Activated CD4-positive, alpha-beta T cell treated with anti-CD3 and anti-CD28 coated beads, Interleukin-2, amount 10 ng/mL, durations not matched to agents 24 days and 14 days (primary cell): ENCODE measurements at regions of chr12 and their contacts with region 1.

Region 1: GRCh38 chr12:12327802-12328201 is 22.2 kb downstream of the MANSC1 start:
- DNase-seq: peak; percentile 75
- H3K4me3 Mint-ChIP-seq: no peak overlapping the region
- H3K27ac Mint-ChIP-seq: no peak overlapping the region
- H3K4me1 Mint-ChIP-seq: peaks cover 18% of the 10 kb centered on the region
- H3K27me3 Mint-ChIP-seq: peaks cover 12% of the 10 kb centered on the region

Region 2: GRCh38 chr12:11553871-11554533 is 773.8 kb before region 1 on chr12:
- intact Hi-C with region 1: loop called (anchors 2 kb)
- DNase-seq: peak; percentile 88
- H3K4me3 Mint-ChIP-seq: peak overlapping the region; percentile 26
- H3K27ac Mint-ChIP-seq: no peak overlapping the region
- H3K4me1 Mint-ChIP-seq: peaks cover 22% of the 10 kb centered on the region
- H3K27me3 Mint-ChIP-seq: peaks cover 18% of the 10 kb centered on the region

Region 3: DNA sequence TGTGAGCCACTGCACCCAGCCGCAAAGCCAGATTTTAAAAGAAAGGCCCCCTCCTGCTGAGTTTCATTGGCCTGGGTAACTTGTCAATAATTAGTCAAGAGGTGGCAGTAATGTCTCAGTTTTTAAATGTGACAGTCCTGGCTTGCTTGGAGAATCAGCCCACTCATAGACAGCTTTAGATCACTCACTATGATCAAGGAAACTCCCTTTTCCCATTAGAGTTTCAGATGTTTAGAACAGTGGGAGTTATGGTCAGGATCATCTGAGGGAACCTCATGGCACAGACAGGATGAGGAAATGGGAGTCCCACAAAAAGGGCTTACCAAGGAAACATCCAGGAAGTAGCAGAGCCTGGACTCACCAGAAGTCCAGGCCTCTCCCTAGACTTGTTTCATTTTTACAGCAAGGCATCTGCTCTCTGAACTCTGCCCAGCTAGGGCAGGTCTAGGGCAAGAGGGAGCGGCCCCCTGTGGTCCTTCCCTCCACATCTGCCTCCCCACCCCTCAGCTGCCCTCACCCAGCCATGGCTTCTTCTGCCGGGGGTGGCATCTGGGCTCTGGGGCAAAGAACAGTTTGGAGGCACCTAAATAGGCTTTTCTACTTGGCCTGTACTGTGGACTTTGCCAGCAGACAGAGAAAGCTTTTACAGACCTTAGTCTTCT is 245.8 kb before region 1 on chr12:
- intact Hi-C with region 1: loop called (anchors 2 kb)
- DNase-seq: peak; percentile 60
- H3K4me3 Mint-ChIP-seq: no peak overlapping the region
- H3K27ac Mint-ChIP-seq: no peak overlapping the region
- H3K4me1 Mint-ChIP-seq: peaks cover 5% of the 10 kb centered on the region
- H3K27me3 Mint-ChIP-seq: no peaks in the 10 kb centered on the region

Region 4: GRCh38 chr12:13764748-13765147 is 1436.9 kb after region 1 on chr12:
- intact Hi-C with region 1: no loop called
- DNase-seq: no peak
- H3K4me3 Mint-ChIP-seq: no peak overlapping the region
- H3K27ac Mint-ChIP-seq: no peak overlapping the region
- H3K4me1 Mint-ChIP-seq: no peaks in the 10 kb centered on the region
- H3K27me3 Mint-ChIP-seq: no peaks in the 10 kb centered on the region